Activated naive CD4-positive, alpha-beta T cell treated with anti-CD3 and anti-CD28 coated beads for 36 hours (primary cell): ENCODE measurements at regions of chr2 and their contacts with region 1.

Region 1: DNA sequence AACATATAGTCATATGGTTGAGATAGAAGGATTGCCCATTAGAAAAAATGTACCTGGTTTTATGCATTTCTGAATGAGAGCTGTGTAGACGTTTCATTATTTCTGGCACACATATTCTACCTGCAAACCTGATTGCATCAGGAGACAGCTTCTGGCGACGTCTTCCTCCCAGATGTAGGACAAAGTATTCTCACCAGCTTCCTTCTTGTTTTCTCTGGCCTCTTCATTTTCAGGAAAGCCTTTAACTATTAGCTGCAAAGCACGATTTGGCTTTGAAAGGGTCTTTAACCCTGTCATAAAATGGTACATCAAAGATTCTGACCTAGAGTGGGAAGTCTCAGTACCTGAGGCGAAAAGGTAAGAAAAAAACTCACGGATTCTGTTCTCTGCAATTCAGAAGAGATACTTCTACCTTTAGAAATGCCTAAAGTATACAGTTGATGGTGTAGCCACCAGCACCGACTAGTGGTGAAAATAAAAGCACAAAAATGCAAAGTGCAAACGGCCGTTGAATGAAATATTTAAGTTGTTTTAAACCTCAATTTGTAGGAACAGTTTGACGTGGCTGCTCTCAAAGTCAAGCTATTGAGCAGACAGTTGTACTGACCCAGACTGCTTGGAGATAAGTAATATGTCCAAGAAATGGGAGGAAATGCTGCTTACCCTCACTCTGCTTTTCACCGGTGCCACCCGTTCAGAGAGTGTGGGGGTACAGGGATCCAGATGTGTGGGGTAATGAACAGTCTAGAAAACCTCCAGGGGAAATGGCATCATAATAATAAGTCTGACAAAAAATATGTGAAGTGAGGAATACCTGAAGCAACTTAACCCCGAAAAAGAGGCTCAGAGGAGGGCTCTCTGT is 20.2 kb downstream of the IL18RAP start:
- DNase-seq: peak; percentile 74
- H3K4me3 Mint-ChIP-seq: no peak overlapping the region
- H3K27ac Mint-ChIP-seq: peak overlapping the region; percentile 34
- H3K4me1 Mint-ChIP-seq: peaks cover 10% of the 10 kb centered on the region
- H3K27me3 Mint-ChIP-seq: no peaks in the 10 kb centered on the region

Region 2: DNA sequence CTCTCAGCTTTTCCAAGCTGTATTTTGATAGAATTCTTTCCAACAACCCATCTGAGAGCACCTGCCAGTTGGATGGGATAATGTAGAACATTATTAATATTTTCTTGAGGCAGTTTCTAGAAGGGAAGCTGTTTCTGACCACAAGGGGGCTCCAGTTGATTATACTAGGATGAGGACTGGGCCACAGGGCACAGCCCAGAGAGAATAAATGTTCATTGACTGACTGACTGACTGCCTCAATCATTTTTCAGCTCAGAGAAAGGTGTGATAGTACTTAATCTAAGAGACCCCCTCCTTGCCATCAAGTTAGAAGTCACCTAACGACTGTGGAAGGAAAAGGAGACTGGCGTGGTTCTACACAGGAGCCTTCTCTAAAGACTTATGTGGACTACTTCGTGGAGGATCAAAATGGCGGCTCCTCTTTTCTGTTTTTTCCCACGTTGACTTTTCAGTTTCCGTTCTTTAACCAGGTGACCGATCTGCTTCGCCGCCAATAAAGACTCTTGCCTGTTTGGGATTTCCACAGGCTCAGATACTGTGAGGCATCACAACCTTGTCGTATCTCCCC is 1024.0 kb before region 1 on chr2:
- CTCF ChIA-PET with region 1: no interaction called
- intact Hi-C with region 1: loop called (anchors 10 kb)
- DNase-seq: peak; percentile 82
- H3K4me3 Mint-ChIP-seq: no peak overlapping the region
- H3K27ac Mint-ChIP-seq: no peak overlapping the region
- H3K4me1 Mint-ChIP-seq: no peaks in the 10 kb centered on the region
- H3K27me3 Mint-ChIP-seq: no peaks in the 10 kb centered on the region

Region 3: GRCh38 chr2:102020596-102021181 is 422.5 kb before region 1 on chr2:
- CTCF ChIA-PET with region 1: interaction called, 6 read pairs
- intact Hi-C with region 1: loop called (anchors 2 kb)
- DNase-seq: peak; percentile 93
- H3K4me3 Mint-ChIP-seq: no peak overlapping the region
- H3K27ac Mint-ChIP-seq: no peak overlapping the region
- H3K4me1 Mint-ChIP-seq: peaks cover 25% of the 10 kb centered on the region
- H3K27me3 Mint-ChIP-seq: no peaks in the 10 kb centered on the region

Region 4: DNA sequence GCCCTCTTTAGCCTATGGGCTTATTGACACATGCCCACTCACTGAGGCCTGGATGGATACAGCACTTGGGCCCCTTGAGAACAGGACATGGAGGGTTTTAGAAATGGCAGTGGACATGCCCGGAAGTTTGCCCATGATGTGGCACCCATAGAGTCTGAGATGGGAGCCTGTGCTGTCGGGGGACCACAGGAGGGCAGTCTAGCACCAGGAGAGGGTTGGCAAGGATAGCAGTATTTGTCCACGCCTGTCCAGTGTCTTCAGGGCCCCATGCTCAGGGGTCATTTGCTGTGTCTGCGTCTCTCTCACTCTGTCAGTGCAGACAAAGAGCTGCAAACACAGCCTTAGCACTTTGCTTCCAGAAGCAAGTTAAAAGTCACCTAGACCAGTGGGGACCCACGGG is 207.7 kb before region 1 on chr2:
- CTCF ChIA-PET with region 1: interaction called, 49 read pairs
- intact Hi-C with region 1: no loop called
- DNase-seq: peak; percentile 68
- H3K4me3 Mint-ChIP-seq: no peak overlapping the region
- H3K27ac Mint-ChIP-seq: no peak overlapping the region
- H3K4me1 Mint-ChIP-seq: peaks cover 43% of the 10 kb centered on the region
- H3K27me3 Mint-ChIP-seq: no peaks in the 10 kb centered on the region

Region 5: DNA sequence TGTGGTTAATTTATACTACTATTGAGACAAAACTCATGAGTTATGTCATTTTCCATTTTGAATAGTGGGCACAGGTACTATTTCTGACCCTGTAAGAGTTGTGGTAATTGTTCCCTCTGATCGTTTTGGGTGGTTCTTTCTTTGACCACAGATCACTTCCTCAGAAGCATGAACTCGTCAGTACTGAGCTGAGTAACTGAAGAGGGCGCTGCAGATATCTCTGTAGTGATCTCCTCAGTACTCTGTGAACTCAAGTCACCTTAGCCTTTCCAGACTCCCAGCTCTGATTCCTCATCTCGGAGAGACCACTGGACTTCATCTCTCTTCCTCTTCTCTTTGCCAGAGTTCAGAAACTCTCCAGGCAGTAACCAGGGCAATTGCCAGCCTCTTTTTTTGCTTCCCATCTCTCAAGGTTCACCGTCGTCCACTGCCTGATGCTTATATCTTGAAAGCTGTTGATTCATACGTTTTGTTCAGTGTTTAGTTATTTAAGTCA is 141.3 kb before region 1 on chr2:
- CTCF ChIA-PET with region 1: interaction called, 19 read pairs
- intact Hi-C with region 1: loop called (anchors 1 kb)
- DNase-seq: peak; percentile 76
- H3K4me3 Mint-ChIP-seq: no peak overlapping the region
- H3K27ac Mint-ChIP-seq: no peak overlapping the region
- H3K4me1 Mint-ChIP-seq: peaks cover 35% of the 10 kb centered on the region
- H3K27me3 Mint-ChIP-seq: no peaks in the 10 kb centered on the region

Region 6: GRCh38 chr2:102424754-102425153 is 18.4 kb before region 1 on chr2:
- CTCF ChIA-PET with region 1: interaction called, 13 read pairs
- intact Hi-C with region 1: no loop called
- DNase-seq: no peak
- H3K4me3 Mint-ChIP-seq: no peak overlapping the region
- H3K27ac Mint-ChIP-seq: peak overlapping the region; percentile 4
- H3K4me1 Mint-ChIP-seq: peaks cover 78% of the 10 kb centered on the region
- H3K27me3 Mint-ChIP-seq: no peaks in the 10 kb centered on the region